ENCODE measurements at regions of chr7 and their contacts with region 1.

Region 1: DNA sequence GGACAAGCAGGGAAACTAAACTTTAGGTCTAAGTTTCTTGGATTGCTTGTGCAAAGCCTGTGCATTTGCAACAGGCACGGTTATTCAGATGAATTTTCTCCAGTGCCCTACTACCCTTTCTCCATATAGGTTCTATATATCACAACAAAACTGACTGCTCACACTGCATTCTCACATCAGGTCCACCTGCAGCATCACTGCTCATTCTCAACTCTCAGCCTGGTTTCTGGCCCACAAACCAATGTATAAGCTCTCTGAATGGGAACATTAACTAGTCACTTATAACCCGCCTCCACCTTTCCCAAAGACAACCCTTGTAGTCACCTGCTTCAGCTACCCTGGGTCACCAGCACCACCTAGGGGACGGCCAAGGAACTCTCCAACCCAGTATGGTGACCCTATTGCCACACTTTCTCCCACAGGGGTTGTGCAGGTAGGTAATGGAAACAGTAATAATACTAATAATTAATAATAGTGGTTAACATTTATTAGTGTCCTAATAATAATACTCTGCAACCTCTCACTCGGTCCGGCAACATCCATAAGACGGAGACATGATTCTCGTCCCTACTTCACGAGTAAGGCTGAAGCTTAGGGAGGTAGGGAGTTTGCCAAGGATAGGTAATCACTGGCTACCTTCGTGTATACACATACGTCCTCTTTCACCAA is 97.3 kb downstream of the CLEC2L start:
- DNase-seq: peak; percentile 57
- ATAC-seq: peak; percentile 60
- H3K4me3 ChIP-seq: no peak overlapping the region
- H3K27ac ChIP-seq: no peak overlapping the region
- H3K4me1 ChIP-seq: peaks cover 12% of the 10 kb centered on the region
- H3K27me3 ChIP-seq: no peaks in the 10 kb centered on the region
- CTCF ChIP-seq: peak; percentile 73

Region 2: DNA sequence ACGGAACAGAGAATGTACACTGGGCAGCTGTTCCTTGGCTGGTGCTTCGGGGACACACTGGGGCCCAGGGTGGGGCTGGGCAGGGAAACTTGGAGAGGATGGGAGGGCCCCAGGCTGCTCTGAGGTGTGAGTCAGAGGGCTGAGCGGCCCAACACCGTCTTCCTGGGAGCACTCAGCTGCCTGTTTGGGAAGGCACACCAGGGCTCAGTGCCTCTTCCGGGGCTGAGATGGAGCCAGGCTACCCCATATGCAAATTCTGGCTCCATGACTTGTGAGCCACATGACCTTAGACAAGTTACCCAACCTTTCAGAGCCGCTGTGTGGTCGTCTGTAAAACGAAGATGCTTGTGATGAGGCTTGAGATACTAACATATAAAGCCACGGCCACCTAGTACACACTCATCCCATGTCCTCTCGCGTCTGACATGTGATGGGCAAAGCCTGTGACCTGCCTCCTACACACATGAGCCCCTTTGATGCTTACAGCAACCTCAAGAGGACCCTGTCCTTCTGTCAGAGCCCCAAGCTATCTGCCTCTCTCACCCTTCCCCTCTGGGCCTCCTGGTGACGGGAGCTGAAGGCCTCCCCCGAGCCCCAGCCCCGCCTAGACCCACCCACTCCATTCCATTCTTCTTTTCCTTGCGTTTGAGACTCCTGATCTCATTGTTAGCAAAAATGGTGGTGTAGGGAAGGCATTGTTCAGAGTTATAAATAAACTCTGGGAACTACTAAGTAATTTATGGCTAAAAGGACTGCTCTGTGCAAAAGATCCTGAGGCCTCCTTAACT is 163.5 kb before region 1 on chr7:
- CTCF ChIA-PET with region 1: no interaction called
- POLR2A ChIA-PET with region 1: no interaction called
- intact Hi-C with region 1: no loop called
- DNase-seq: peak; percentile 13
- ATAC-seq: peak; percentile 85
- H3K4me3 ChIP-seq: no peak overlapping the region
- H3K27ac ChIP-seq: no peak overlapping the region
- H3K4me1 ChIP-seq: no peaks in the 10 kb centered on the region
- H3K27me3 ChIP-seq: no peaks in the 10 kb centered on the region
- CTCF ChIP-seq: no peak

Region 3: GRCh38 chr7:139727151-139727705 is 106.4 kb after region 1 on chr7:
- CTCF ChIA-PET with region 1: no interaction called
- POLR2A ChIA-PET with region 1: no interaction called
- intact Hi-C with region 1: no loop called
- DNase-seq: peak; percentile 32
- ATAC-seq: no peak; the same call in 1 of the 2 replicates
- H3K4me3 ChIP-seq: no peak overlapping the region
- H3K27ac ChIP-seq: peak overlapping the region; percentile 63
- H3K4me1 ChIP-seq: peaks cover 70% of the 10 kb centered on the region
- H3K27me3 ChIP-seq: no peaks in the 10 kb centered on the region
- CTCF ChIP-seq: no peak

Region 4: GRCh38 chr7:139738101-139738489 is 117.3 kb after region 1 on chr7:
- CTCF ChIA-PET with region 1: no interaction called
- POLR2A ChIA-PET with region 1: interaction called, 14 read pairs
- intact Hi-C with region 1: no loop called
- DNase-seq: no peak
- ATAC-seq: no peak
- H3K4me3 ChIP-seq: no peak overlapping the region
- H3K27ac ChIP-seq: peak overlapping the region; percentile 33
- H3K4me1 ChIP-seq: peaks cover 60% of the 10 kb centered on the region
- H3K27me3 ChIP-seq: no peaks in the 10 kb centered on the region
- CTCF ChIP-seq: no peak

Region 5: GRCh38 chr7:139753081-139753692 is 132.4 kb after region 1 on chr7:
- CTCF ChIA-PET with region 1: interaction called, 11 read pairs
- POLR2A ChIA-PET with region 1: no interaction called
- intact Hi-C with region 1: no loop called
- DNase-seq: peak; percentile 69
- ATAC-seq: peak; percentile 67
- H3K4me3 ChIP-seq: no peak overlapping the region
- H3K27ac ChIP-seq: peak overlapping the region; percentile 51
- H3K4me1 ChIP-seq: peaks cover 22% of the 10 kb centered on the region
- H3K27me3 ChIP-seq: no peaks in the 10 kb centered on the region
- CTCF ChIP-seq: peak; percentile 42; the same call in 1 of the 2 replicates

Measured in PC-3 (cell line).